Gastrocnemius medialis (tissue), 4 donors: ENCODE measurements at regions of chr14 and their contacts with region 1.

Region 1: GRCh38 chr14:38887696-38888095 is 215.3 kb downstream of the SEC23A start:
- DNase-seq: no peak
- ATAC-seq: no peak
- H3K4me3 ChIP-seq: no peak overlapping the region
- H3K27ac ChIP-seq: no peak overlapping the region
- H3K4me1 ChIP-seq: no peaks in the 10 kb centered on the region
- H3K27me3 ChIP-seq: no peaks in the 10 kb centered on the region
- CTCF ChIP-seq: no peak
- POLR2A ChIP-seq: no peak

Region 2: GRCh38 chr14:39857376-39858055 is 969.8 kb after region 1 on chr14:
- in situ Hi-C with region 1: no loop called
- intact Hi-C with region 1: loop called (anchors 10 kb)
- DNase-seq: no peak
- ATAC-seq: no peak
- H3K4me3 ChIP-seq: no peak overlapping the region
- H3K27ac ChIP-seq: no peak overlapping the region
- H3K4me1 ChIP-seq: no peaks in the 10 kb centered on the region
- H3K27me3 ChIP-seq: no peaks in the 10 kb centered on the region
- CTCF ChIP-seq: no peak
- POLR2A ChIP-seq: no peak